ENCODE measurements at regions of chr3 and their contacts with region 1.

Region 1: GRCh38 chr3:143972505-143973255 is 1.1 kb downstream of the DIPK2A start:
- DNase-seq: peak; percentile 73
- H3K4me3 ChIP-seq: peak overlapping the region; percentile 72 to 93 (median 88)
- H3K27ac ChIP-seq: peak overlapping the region; percentile 91
- H3K4me1 ChIP-seq: peaks cover 9% of the 10 kb centered on the region
- H3K27me3 ChIP-seq: no peaks in the 10 kb centered on the region
- CTCF ChIP-seq: peak in 1 of 2 donors; percentile 67

Region 2: DNA sequence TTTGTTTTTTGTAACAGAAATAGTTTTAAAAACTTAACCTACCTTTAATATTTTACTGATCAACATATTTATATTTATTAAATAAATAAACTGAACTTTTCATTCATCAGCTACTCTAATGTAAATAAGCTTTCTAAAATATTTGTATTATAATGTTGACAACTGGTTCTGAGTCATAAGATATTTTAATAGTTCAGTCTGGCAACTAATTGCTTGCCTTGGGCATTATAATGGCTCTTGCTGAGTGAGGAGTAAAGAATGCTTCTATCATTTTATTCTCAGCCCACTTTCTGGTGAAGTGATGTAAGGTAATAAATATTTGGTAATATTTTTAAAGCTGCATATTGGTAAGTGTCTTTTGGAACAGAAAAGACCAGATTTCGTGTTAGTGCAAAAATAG is 80.4 kb after region 1 on chr3:
- CTCF ChIA-PET with region 1: no interaction called
- dilution Hi-C with region 1: no loop called
- in situ Hi-C with region 1: no loop called
- intact Hi-C with region 1: loop called (anchors 2 kb)
- DNase-seq: peak; percentile 57
- H3K4me3 ChIP-seq: no peak overlapping the region
- H3K27ac ChIP-seq: no peak overlapping the region
- H3K4me1 ChIP-seq: peaks cover 7% of the 10 kb centered on the region
- H3K27me3 ChIP-seq: no peaks in the 10 kb centered on the region
- CTCF ChIP-seq: no peak

Region 3: GRCh38 chr3:144270100-144270499 is 297.4 kb after region 1 on chr3:
- CTCF ChIA-PET with region 1: no interaction called
- dilution Hi-C with region 1: no loop called
- in situ Hi-C with region 1: no loop called
- intact Hi-C with region 1: loop called (anchors 10 kb)
- DNase-seq: no peak
- H3K4me3 ChIP-seq: no peak overlapping the region
- H3K27ac ChIP-seq: no peak overlapping the region
- H3K4me1 ChIP-seq: no peaks in the 10 kb centered on the region
- H3K27me3 ChIP-seq: no peaks in the 10 kb centered on the region
- CTCF ChIP-seq: no peak

Region 4: GRCh38 chr3:144770915-144771351 is 798.3 kb after region 1 on chr3:
- CTCF ChIA-PET with region 1: no interaction called
- dilution Hi-C with region 1: no loop called
- in situ Hi-C with region 1: no loop called
- intact Hi-C with region 1: loop called (anchors 2 kb)
- DNase-seq: no peak
- H3K4me3 ChIP-seq: no peak overlapping the region
- H3K27ac ChIP-seq: no peak overlapping the region
- H3K4me1 ChIP-seq: no peaks in the 10 kb centered on the region
- H3K27me3 ChIP-seq: no peaks in the 10 kb centered on the region
- CTCF ChIP-seq: peak in 1 of 2 donors; percentile 19

Measured in mammary epithelial cell (primary cell).